ENCODE measurements at regions of chr11 and their contacts with region 1.

Region 1: DNA sequence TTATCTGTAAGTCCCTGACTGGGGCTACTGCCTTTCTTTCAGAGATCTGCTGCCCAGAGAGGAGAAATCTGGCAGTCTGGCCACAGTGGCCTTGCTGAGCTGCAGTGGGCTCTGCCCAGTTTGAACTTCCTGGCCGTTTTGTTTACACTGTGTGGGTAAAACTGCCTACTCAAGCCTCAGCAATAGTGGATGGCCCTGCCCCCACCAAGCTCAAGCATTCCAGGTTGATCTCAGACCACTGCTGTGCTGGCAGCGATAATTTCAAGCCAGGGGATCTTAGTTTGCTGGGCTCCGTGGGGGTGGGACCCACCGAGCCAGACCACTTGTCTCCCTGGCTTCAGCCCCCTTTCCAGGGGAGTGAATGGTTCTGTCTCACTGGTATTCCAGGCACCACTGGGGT is 117.5 kb downstream of the TRPC6 start:
- DNase-seq: peak in 1 of 2 experiments; percentile 48
- H3K4me3 ChIP-seq: no peak overlapping the region
- H3K27ac ChIP-seq: no peak overlapping the region
- H3K4me1 ChIP-seq: peaks cover 2 to 8% (median 5%) of the 10 kb centered on the region in 4 experiments; a peak in 5 of 7 replicates
- H3K27me3 ChIP-seq: no peaks in the 10 kb centered on the region
- CTCF ChIP-seq: no peak
- EP300 ChIP-seq: no peak
- POLR2A ChIP-seq: no peak
- RAD21 ChIP-seq: no peak

Region 2: GRCh38 chr11:101444164-101444563 is 22.2 kb before region 1 on chr11:
- CTCF ChIA-PET with region 1: no interaction called
- POLR2A ChIA-PET with region 1: no interaction called
- DNase-seq: no peak
- H3K4me3 ChIP-seq: no peak overlapping the region
- H3K27ac ChIP-seq: no peak overlapping the region
- H3K4me1 ChIP-seq: no peaks in the 10 kb centered on the region
- H3K27me3 ChIP-seq: no peaks in the 10 kb centered on the region
- CTCF ChIP-seq: no peak
- EP300 ChIP-seq: no peak
- POLR2A ChIP-seq: no peak
- RAD21 ChIP-seq: no peak

Region 3: GRCh38 chr11:101478587-101479369 is 12.4 kb after region 1 on chr11:
- CTCF ChIA-PET with region 1: interaction called, 14 read pairs
- POLR2A ChIA-PET with region 1: no interaction called
- DNase-seq: peak in 1 of 2 experiments; percentile 45
- H3K4me3 ChIP-seq: no peak overlapping the region
- H3K27ac ChIP-seq: no peak overlapping the region
- H3K4me1 ChIP-seq: peaks cover 0 to 4% (median 2%) of the 10 kb centered on the region in 4 experiments; a peak in 1 of 7 replicates
- H3K27me3 ChIP-seq: no peaks in the 10 kb centered on the region
- CTCF ChIP-seq: no peak
- EP300 ChIP-seq: no peak
- POLR2A ChIP-seq: no peak
- RAD21 ChIP-seq: no peak

Measured in H1 (cell line).